Activated CD8-positive, alpha-beta T cell treated with anti-CD3 and anti-CD28 coated beads for 36 hours (primary cell): ENCODE measurements at regions of chrX and their contacts with region 1.

Region 1: GRCh38 chrX:54044126-54044876 is at the start of gene PHF8:
- DNase-seq: peak; percentile 95
- ATAC-seq: peak; percentile 89
- H3K4me3 Mint-ChIP-seq: peak within 1 kb of the TSS; percentile 96
- H3K27ac Mint-ChIP-seq: peak within 1 kb of the TSS; percentile 96
- H3K4me1 Mint-ChIP-seq: peaks cover 27% of the 10 kb centered on the region
- H3K27me3 Mint-ChIP-seq: no peaks in the 10 kb centered on the region
- CTCF ChIP-seq: no peak
- total RNA-seq, gene PHF8: 41.3 to 45.6 TPM

Region 2: GRCh38 chrX:54024350-54024749 is 20.0 kb before region 1 on chrX:
- CTCF ChIA-PET with region 1: no interaction called
- POLR2A ChIA-PET with region 1: no interaction called
- intact Hi-C with region 1: no loop called
- DNase-seq: no peak
- ATAC-seq: no peak
- H3K4me3 Mint-ChIP-seq: no peak overlapping the region
- H3K27ac Mint-ChIP-seq: no peak overlapping the region
- H3K4me1 Mint-ChIP-seq: peaks cover 2% of the 10 kb centered on the region
- H3K27me3 Mint-ChIP-seq: no peaks in the 10 kb centered on the region
- CTCF ChIP-seq: no peak

Region 3: GRCh38 chrX:54182864-54183608 is 138.7 kb after region 1 on chrX and contains the start of gene FAM120C:
- CTCF ChIA-PET with region 1: interaction called, 4 read pairs
- POLR2A ChIA-PET with region 1: interaction called, 16 read pairs
- intact Hi-C with region 1: loop called (anchors 5 kb)
- DNase-seq: peak; percentile 65
- ATAC-seq: peak; percentile 51
- H3K4me3 Mint-ChIP-seq: peak within 1 kb of the TSS; percentile 85
- H3K27ac Mint-ChIP-seq: peak within 1 kb of the TSS; percentile 92
- H3K4me1 Mint-ChIP-seq: peaks cover 37% of the 10 kb centered on the region
- H3K27me3 Mint-ChIP-seq: no peaks in the 10 kb centered on the region
- CTCF ChIP-seq: no peak
- total RNA-seq, gene FAM120C: 8.3 to 8.4 TPM